Esophagus muscularis mucosa (tissue), 4 donors: ENCODE measurements at regions of chr7 and their contacts with region 1.

Region 1: DNA sequence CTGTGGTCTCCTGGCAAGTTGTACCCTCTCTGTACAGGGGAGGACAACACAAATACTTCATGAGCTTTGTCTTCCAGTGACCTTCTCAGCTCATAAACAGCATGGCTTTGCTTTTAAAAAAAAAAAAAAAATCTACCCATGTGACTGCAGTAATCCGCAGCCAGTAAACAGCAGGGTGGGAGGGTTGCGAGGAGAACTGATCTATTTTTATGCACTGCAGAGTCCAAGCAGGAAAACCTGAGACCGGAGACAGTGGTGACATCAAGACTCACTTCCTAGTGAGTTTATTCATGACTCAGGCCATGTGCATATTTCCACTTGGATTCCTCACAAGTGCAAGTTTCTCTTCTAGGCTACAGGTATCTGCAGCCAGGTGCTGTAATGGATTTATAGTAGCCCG is 127.9 kb downstream of the NRF1 start:
- DNase-seq: no peak
- H3K4me3 ChIP-seq: no peak overlapping the region
- H3K27ac ChIP-seq: no peak overlapping the region
- H3K4me1 ChIP-seq: peaks cover 31 to 38% (median 34%) of the 10 kb centered on the region in 4 donors
- H3K27me3 ChIP-seq: no peaks in the 10 kb centered on the region
- CTCF ChIP-seq: no peak
- EP300 ChIP-seq: no peak
- POLR2A ChIP-seq: no peak

Region 2: GRCh38 chr7:129875745-129876411 is 136.5 kb after region 1 on chr7:
- intact Hi-C with region 1: no loop called
- DNase-seq: no peak
- H3K4me3 ChIP-seq: peak overlapping the region in 3 of 4 donors; percentile 18 to 30 (median 21)
- H3K27ac ChIP-seq: peak overlapping the region; percentile 47 to 66 (median 56)
- H3K4me1 ChIP-seq: peaks cover 44 to 52% (median 51%) of the 10 kb centered on the region in 4 donors
- H3K27me3 ChIP-seq: no peaks in the 10 kb centered on the region
- CTCF ChIP-seq: no peak
- EP300 ChIP-seq: no peak
- POLR2A ChIP-seq: no peak

Region 3: GRCh38 chr7:130010689-130011412 is 271.4 kb after region 1 on chr7:
- intact Hi-C with region 1: loop called (anchors 10 kb)
- DNase-seq: peak; percentile 97
- H3K4me3 ChIP-seq: no peak overlapping the region
- H3K27ac ChIP-seq: no peak overlapping the region
- H3K4me1 ChIP-seq: peaks cover 0 to 14% (median 8%) of the 10 kb centered on the region in 4 donors
- H3K27me3 ChIP-seq: no peaks in the 10 kb centered on the region
- CTCF ChIP-seq: peak; percentile 77 to 94 (median 84)
- EP300 ChIP-seq: no peak
- POLR2A ChIP-seq: no peak